OCI-LY7 (cell line): ENCODE measurements at regions of chr16 and their contacts with region 1.

Region 1: GRCh38 chr16:12311309-12311708 is 334.8 kb downstream of the SNX29 start:
- DNase-seq: no peak
- H3K4me3 ChIP-seq: no peak overlapping the region
- H3K27ac ChIP-seq: no peak overlapping the region
- H3K4me1 ChIP-seq: peaks cover 62% of the 10 kb centered on the region
- CTCF ChIP-seq: no peak

Region 2: GRCh38 chr16:12289175-12290063 is 21.9 kb before region 1 on chr16:
- CTCF ChIA-PET with region 1: no interaction called
- POLR2A ChIA-PET with region 1: interaction called, 26 read pairs
- intact Hi-C with region 1: no loop called
- DNase-seq: peak; percentile 51
- H3K4me3 ChIP-seq: no peak overlapping the region
- H3K27ac ChIP-seq: peak overlapping the region; percentile 95
- H3K4me1 ChIP-seq: peaks cover 93% of the 10 kb centered on the region
- CTCF ChIP-seq: no peak

Region 3: DNA sequence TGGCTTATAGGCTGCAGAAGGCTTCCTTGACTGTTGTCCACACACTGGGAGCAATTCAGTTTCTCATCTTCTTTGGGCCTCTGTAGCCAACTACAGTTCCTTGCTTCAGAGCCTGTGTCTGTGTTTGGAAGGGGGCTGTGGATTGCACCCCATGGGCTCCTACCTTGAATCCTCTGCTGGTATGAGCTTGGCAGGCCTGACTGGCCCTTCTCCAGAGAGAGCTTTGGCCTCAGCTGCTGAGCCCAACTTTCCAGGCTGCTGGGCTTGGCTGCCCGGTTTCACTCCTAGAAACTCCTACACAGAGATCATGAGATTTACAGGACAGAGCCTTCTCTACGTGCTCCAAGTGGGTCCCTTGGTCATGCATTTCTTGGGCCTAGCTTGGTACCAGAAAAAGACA is 19.6 kb after region 1 on chr16:
- CTCF ChIA-PET with region 1: interaction called, 3 read pairs
- POLR2A ChIA-PET with region 1: interaction called, 11 read pairs
- intact Hi-C with region 1: no loop called
- DNase-seq: no peak
- H3K4me3 ChIP-seq: peak overlapping the region; percentile 37
- H3K27ac ChIP-seq: peak overlapping the region; percentile 92
- H3K4me1 ChIP-seq: peaks cover 100% of the 10 kb centered on the region
- CTCF ChIP-seq: no peak